MCF 10A (cell line): ENCODE measurements at regions of chr1 and their contacts with region 1.

Region 1: DNA sequence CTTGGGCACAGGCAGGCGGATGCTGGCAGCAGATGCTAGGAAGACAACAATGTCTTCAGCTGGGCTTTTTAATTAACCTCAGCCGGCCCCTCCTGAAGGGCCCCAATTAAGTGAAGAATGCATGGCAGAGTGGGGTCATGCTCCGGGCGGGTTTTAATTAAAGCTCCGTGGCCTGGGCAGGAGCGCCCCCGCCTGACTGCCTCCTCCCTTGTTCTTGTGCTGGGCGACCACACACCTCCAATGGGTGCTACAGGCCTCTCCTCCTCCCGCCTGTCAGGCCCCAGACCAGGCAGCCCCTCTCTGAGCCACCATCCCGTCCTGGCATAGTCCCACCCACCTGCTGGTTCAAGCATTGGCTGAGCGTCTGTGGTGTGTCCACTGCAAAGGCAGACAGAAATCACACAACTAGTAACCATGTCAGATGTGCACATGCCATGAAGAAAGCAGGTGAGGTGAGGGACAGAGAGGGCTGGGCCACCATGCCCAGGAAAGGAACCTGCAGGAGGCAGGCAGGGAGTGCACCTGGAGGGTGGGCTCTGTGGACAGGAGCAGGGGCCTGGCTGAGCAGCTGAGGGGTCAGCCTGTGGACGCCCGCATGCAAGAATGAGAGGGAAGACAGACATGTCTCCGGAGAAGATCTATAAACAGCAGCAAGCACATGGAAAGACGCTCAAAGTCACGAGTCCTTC is 8.5 kb upstream of the ARF1 start:
- DNase-seq: peak; percentile 74
- H3K4me3 Mint-ChIP-seq: no peak overlapping the region
- H3K27ac Mint-ChIP-seq: no peak overlapping the region
- H3K4me1 Mint-ChIP-seq: peaks cover 11% of the 10 kb centered on the region
- H3K27me3 Mint-ChIP-seq: peaks cover 2% of the 10 kb centered on the region
- CTCF ChIP-seq: peak; percentile 77

Region 2: GRCh38 chr1:227219715-227220292 is 854.2 kb before region 1 on chr1:
- CTCF ChIA-PET with region 1: no interaction called
- POLR2A ChIA-PET with region 1: no interaction called
- intact Hi-C with region 1: no loop called
- DNase-seq: no peak
- H3K4me3 Mint-ChIP-seq: no peak overlapping the region
- H3K27ac Mint-ChIP-seq: no peak overlapping the region
- H3K4me1 Mint-ChIP-seq: peaks cover 27% of the 10 kb centered on the region
- H3K27me3 Mint-ChIP-seq: no peaks in the 10 kb centered on the region
- CTCF ChIP-seq: no peak

Region 3: GRCh38 chr1:227666286-227666685 is 407.7 kb before region 1 on chr1:
- CTCF ChIA-PET with region 1: no interaction called
- POLR2A ChIA-PET with region 1: no interaction called
- intact Hi-C with region 1: no loop called
- DNase-seq: peak; percentile 16
- H3K4me3 Mint-ChIP-seq: no peak overlapping the region
- H3K27ac Mint-ChIP-seq: no peak overlapping the region
- H3K4me1 Mint-ChIP-seq: no peaks in the 10 kb centered on the region
- H3K27me3 Mint-ChIP-seq: no peaks in the 10 kb centered on the region
- CTCF ChIP-seq: no peak

Region 4: GRCh38 chr1:228004331-228004855 is 69.6 kb before region 1 on chr1:
- CTCF ChIA-PET with region 1: interaction called, 37 read pairs
- POLR2A ChIA-PET with region 1: interaction called, 19 read pairs
- intact Hi-C with region 1: loop called (anchors 1 kb)
- DNase-seq: peak; percentile 82
- H3K4me3 Mint-ChIP-seq: no peak overlapping the region
- H3K27ac Mint-ChIP-seq: no peak overlapping the region
- H3K4me1 Mint-ChIP-seq: peaks cover 10% of the 10 kb centered on the region
- H3K27me3 Mint-ChIP-seq: peaks cover 37% of the 10 kb centered on the region
- CTCF ChIP-seq: peak; percentile 88